BJ (cell line): ENCODE measurements at regions of chr15 and their contacts with region 1.

Region 1: GRCh38 chr15:81189583-81190283 is 6.9 kb upstream of the IL16 start:
- DNase-seq: peak; percentile 98
- H3K4me3 ChIP-seq: no peak overlapping the region
- H3K27me3 ChIP-seq: no peaks in the 10 kb centered on the region
- CTCF ChIP-seq: no peak

Region 2: GRCh38 chr15:81117136-81117535 is 72.6 kb before region 1 on chr15:
- CTCF ChIA-PET with region 1: no interaction called
- POLR2A ChIA-PET with region 1: interaction called, 10 read pairs
- DNase-seq: no peak
- H3K4me3 ChIP-seq: no peak overlapping the region
- H3K27me3 ChIP-seq: peaks cover 5% of the 10 kb centered on the region
- CTCF ChIP-seq: no peak

Region 3: GRCh38 chr15:81239190-81239589 is 49.5 kb after region 1 on chr15:
- CTCF ChIA-PET with region 1: no interaction called
- POLR2A ChIA-PET with region 1: no interaction called
- DNase-seq: no peak
- H3K4me3 ChIP-seq: no peak overlapping the region
- H3K27me3 ChIP-seq: no peaks in the 10 kb centered on the region
- CTCF ChIP-seq: no peak

Region 4: GRCh38 chr15:81256916-81257315 is 67.2 kb after region 1 on chr15:
- CTCF ChIA-PET with region 1: no interaction called
- POLR2A ChIA-PET with region 1: no interaction called
- DNase-seq: no peak
- H3K4me3 ChIP-seq: no peak overlapping the region
- H3K27me3 ChIP-seq: peaks cover 3% of the 10 kb centered on the region
- CTCF ChIP-seq: peak; percentile 62

Region 5: DNA sequence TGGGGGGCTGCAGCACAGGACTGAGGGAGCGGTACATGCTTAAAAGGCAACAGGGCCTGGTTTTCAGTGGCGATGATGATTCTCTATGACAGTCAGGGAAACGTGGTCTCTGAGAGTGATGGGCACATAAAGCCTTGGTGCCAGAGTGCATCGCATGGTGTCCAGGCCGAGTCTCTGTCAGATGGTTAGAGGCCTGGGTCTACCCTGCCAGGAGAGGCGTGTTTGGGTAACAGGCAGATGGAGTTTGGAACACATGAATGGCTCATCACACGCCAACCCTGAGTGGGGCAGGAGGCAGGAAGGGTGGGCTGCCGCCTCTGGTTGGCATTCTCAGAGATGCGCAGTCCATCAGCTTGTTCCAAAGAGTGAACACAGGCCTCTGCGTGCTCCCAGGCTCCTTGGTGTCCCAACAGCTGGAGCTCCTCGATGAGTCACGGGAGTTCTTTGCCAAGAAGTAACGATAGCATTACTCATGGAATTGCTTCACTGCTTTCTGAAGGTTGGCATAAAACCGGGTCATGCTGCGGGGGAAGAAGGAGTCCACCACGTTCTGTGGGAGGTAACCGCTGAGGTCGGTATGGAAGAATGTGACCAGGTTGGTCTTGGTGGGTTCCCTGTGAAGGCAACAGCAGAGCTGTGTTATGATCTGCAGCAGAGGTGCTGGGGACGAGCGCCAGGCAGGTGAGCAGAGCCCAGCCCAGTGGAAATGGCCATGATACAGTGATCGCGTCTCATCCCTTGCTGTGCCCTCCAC is 123.2 kb after region 1 on chr15:
- CTCF ChIA-PET with region 1: no interaction called
- POLR2A ChIA-PET with region 1: no interaction called
- DNase-seq: peak; percentile 91
- H3K4me3 ChIP-seq: no peak overlapping the region
- H3K27me3 ChIP-seq: no peaks in the 10 kb centered on the region
- CTCF ChIP-seq: no peak